ENCODE measurements at regions of chr9 and their contacts with region 1.

Region 1: GRCh38 chr9:129850821-129851540 is 15.7 kb downstream of the USP20 start:
- DNase-seq: no peak
- ATAC-seq: no peak
- H3K4me3 ChIP-seq: no peak overlapping the region
- H3K4me3 Mint-ChIP-seq: no peak overlapping the region
- H3K27ac ChIP-seq: no peak overlapping the region
- H3K27ac Mint-ChIP-seq: peak overlapping the region in 4 of 9 donors; percentile 50 to 80 (median 64)
- H3K4me1 ChIP-seq: peaks cover 20 to 26% of the 10 kb centered on the region in 2 donors
- H3K4me1 Mint-ChIP-seq: peaks cover 34 to 72% (median 65%) of the 10 kb centered on the region in 7 donors
- H3K27me3 ChIP-seq: no peaks in the 10 kb centered on the region
- H3K27me3 Mint-ChIP-seq: no peaks in the 10 kb centered on the region

Region 2: DNA sequence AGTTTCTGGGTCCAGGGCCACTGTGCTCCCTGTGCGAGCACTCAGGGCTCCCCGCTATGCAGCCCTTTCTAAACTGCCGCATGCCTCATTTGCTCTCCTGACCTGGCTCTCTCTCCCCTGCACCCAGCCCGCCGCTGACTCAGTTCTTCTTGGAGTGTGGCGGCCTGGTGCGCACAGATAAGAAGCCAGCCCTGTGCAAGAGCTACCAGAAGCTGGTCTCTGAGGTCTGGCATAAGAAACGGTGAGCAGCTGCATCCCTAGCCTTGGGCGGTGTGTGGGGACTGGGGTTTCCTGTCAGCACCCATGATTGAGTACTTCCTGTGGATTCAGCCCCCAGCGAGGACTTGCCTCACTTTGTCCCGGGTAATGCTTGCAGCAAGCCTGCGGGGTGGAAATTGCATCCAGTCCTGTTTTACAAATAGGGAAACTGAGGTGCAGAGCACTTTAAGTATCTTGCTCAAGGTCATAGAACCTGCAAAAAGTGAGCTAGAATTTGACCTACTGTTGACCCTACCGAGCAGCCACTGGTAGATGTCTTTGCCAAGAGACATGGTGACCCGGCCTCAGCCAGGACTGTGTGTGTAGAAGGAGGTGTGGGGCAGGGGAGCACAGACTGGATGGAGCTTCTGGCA is 12.2 kb after region 1 on chr9:
- CTCF ChIA-PET with region 1: interaction called, 4 read pairs
- POLR2A ChIA-PET with region 1: interaction called, 11 read pairs
- intact Hi-C with region 1: loop called in 1 of 2 experiments (anchors 1 kb)
- DNase-seq: peak in 8 of 9 donors; percentile 45 to 72 (median 53)
- ATAC-seq: peak; percentile 64
- H3K4me3 ChIP-seq: peak overlapping the region; percentile 30
- H3K4me3 Mint-ChIP-seq: peak overlapping the region; percentile 22 to 79 (median 71)
- H3K27ac ChIP-seq: peak overlapping the region; percentile 60
- H3K27ac Mint-ChIP-seq: peak overlapping the region; percentile 84 to 97 (median 93)
- H3K4me1 ChIP-seq: peaks cover 56 to 78% of the 10 kb centered on the region in 2 donors
- H3K4me1 Mint-ChIP-seq: peaks cover 40 to 72% (median 63%) of the 10 kb centered on the region in 7 donors
- H3K27me3 ChIP-seq: no peaks in the 10 kb centered on the region
- H3K27me3 Mint-ChIP-seq: no peaks in the 10 kb centered on the region

Region 3: DNA sequence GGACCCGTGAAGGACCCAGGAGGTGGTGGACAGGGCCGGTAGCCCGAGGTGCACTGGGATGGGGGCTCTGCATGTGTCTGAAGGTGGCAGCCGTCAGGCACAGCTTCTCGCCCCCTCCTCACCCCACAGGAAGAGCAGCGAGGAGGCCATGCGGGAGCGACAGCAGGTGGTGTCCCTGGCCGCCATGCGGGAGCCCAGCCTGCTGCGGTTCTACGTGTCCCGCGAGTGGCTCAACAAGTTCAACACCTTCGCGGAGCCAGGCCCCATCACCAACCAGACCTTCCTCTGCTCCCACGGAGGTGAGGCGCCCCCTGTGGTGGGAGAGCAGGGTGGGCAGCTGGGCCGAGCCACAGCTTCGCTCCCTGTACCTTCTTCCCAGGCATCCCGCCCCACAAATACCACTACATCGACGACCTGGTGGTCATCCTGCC is 24.2 kb after region 1 on chr9:
- CTCF ChIA-PET with region 1: no interaction called
- POLR2A ChIA-PET with region 1: no interaction called
- intact Hi-C with region 1: no loop called
- DNase-seq: no peak
- ATAC-seq: no peak
- H3K4me3 ChIP-seq: no peak overlapping the region
- H3K4me3 Mint-ChIP-seq: no peak overlapping the region
- H3K27ac ChIP-seq: peak overlapping the region; percentile 29
- H3K27ac Mint-ChIP-seq: no peak overlapping the region
- H3K4me1 ChIP-seq: peaks cover 15 to 21% of the 10 kb centered on the region in 2 donors
- H3K4me1 Mint-ChIP-seq: peaks cover 23 to 56% (median 35%) of the 10 kb centered on the region in 7 donors
- H3K27me3 ChIP-seq: no peaks in the 10 kb centered on the region
- H3K27me3 Mint-ChIP-seq: no peaks in the 10 kb centered on the region

Region 4: DNA sequence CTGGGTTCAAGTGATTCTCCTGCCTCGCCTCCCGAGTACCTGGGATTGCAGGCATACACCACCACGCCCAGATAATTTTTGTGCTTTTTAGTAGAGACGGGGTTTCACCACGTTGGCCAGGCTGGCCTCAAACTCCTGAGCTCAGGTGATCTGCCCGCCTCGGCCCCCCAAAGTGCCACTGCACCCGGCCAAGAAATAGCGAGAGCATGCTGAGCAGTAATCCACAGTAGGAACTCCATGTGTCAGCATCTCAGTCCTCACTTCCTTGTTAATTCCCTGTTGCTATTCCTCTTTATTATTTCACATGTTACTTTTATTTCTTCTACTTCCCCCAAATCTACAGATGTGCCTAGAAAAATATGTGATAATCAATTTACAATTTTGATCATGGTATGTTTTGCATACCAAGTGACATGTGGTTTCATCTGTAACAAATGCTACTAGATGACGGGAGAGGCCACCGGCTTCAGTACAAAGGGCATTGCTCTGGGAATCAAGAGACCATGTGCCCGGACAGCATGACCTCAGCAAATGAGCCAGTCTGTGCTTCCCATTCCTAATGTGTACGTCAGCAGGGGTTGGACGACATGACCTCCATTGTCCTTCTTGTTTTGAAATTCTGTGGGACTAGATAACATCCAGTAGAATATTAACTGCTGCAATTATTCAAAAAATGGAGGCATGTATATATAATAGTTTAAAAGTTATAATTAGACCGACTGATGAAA is 130.4 kb after region 1 on chr9:
- CTCF ChIA-PET with region 1: no interaction called
- POLR2A ChIA-PET with region 1: no interaction called
- intact Hi-C with region 1: no loop called
- DNase-seq: no peak
- ATAC-seq: no peak
- H3K4me3 ChIP-seq: no peak overlapping the region
- H3K4me3 Mint-ChIP-seq: peak overlapping the region in 1 of 10 donors; percentile 1
- H3K27ac ChIP-seq: no peak overlapping the region
- H3K27ac Mint-ChIP-seq: peak overlapping the region in 8 of 9 donors; percentile 0 to 81 (median 44)
- H3K4me1 ChIP-seq: peaks cover 9 to 13% of the 10 kb centered on the region in 2 donors
- H3K4me1 Mint-ChIP-seq: peaks cover 27 to 68% (median 53%) of the 10 kb centered on the region in 7 donors
- H3K27me3 ChIP-seq: no peaks in the 10 kb centered on the region
- H3K27me3 Mint-ChIP-seq: no peaks in the 10 kb centered on the region